SK-N-SH (cell line): ENCODE measurements at regions of chr16 and their contacts with region 1.

Region 1: GRCh38 chr16:83952940-83953795 is at the start of gene OSGIN1:
- DNase-seq: peak; percentile 88
- H3K4me3 ChIP-seq: peak within 1 kb of the TSS; percentile 62 to 65
- H3K27ac ChIP-seq: peak within 1 kb of the TSS; percentile 53 to 78
- H3K4me1 ChIP-seq: peaks cover 9 to 27% of the 10 kb centered on the region in 2 experiments; a peak in 2 of 4 replicates
- H3K27me3 ChIP-seq: no peaks in the 10 kb centered on the region
- CTCF ChIP-seq: no peak
- EP300 ChIP-seq: 0 out of 4 replicates have a peak, but pooled peaks of 1 of the 2 experiments have one; percentile 30
- RAD21 ChIP-seq: no peak
- polyA plus RNA-seq, gene OSGIN1: 4.8 and 5.2 TPM in 2 replicates

Region 2: DNA sequence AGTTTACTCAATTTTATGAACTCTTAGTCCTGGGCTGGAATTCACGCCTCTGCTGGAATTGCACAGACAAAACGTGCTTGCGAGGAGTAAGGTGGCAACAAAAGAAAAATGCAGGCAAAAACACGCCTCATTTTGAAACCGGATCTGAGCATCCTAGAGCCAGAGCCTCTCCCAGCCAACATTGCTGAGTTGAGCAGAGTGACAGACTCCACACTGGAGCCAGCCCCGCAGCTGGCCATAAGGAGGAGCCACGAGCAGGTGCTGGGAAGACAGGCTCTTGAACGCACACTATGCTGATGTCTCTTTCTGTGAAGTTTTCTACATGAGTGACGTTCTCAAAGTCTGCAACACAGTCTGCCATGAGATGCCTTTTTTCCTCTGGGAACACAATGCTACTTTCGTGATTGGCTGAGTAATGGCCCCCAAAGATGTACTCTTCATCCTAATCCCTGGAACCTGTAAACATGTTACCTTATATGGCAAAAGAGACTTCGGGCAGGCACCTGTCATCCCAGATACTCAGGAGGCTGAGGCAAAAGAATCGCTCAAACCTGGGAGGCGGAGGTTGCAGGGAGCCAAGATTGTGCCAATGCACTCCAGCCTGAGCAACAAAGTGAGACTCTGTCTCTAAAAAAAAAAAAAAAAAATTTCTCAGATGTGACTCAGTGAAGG is 159.8 kb before region 1 on chr16:
- CTCF ChIA-PET with region 1: no interaction called
- POLR2A ChIA-PET with region 1: no interaction called
- DNase-seq: no peak
- H3K4me3 ChIP-seq: no peak overlapping the region
- H3K27ac ChIP-seq: no peak overlapping the region
- H3K4me1 ChIP-seq: no peaks in the 10 kb centered on the region
- H3K27me3 ChIP-seq: no peaks in the 10 kb centered on the region
- CTCF ChIP-seq: no peak
- EP300 ChIP-seq: no peak
- RAD21 ChIP-seq: no peak

Region 3: DNA sequence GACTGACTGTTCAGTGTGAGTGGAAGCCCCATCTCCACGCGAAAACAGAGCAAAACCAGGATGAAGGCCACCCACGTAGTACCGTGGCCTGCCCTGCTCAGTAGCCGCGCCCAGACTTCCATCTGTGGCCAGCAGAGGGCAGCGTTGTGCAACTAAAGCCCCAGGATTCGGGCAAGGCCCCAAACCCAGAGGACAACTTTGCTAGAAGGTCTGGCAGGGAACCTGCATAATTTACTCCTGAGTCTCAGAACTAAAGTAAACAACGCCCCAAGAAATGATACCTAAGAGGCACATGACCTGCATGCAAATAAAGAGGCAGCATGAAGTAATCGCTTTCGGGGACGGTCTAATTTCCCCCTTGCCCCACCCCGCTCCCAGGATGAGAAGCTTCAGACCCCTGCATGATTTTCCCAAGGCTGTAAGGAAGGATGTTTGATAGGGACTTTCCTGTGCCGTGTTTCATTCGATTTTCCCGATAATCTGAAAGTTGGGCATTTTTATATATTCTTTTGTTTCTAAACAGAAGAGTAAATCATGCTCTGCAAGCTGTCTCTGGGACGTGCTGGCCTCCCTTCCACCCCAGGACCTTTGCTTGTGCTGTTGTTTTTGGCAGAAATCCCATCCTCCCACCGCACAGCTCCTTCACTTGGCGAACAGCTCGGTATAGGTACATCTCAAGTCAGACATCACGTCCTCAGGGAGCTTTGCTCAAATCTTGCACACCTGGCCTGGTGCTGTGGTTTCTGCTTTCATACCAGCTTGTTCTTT is 126.8 kb before region 1 on chr16:
- CTCF ChIA-PET with region 1: interaction called, 13 read pairs
- POLR2A ChIA-PET with region 1: no interaction called
- DNase-seq: peak; percentile 86
- H3K4me3 ChIP-seq: peak overlapping the region in 1 of 2 experiments; percentile 2; a peak in 1 of 4 replicates
- H3K27ac ChIP-seq: no peak overlapping the region
- H3K4me1 ChIP-seq: no peaks in the 10 kb centered on the region; a peak in 1 of 4 replicates
- H3K27me3 ChIP-seq: no peaks in the 10 kb centered on the region; the same call in 1 of the 2 replicates
- CTCF ChIP-seq: peak; percentile 92
- EP300 ChIP-seq: no peak
- RAD21 ChIP-seq: peak; percentile 86

Region 4: DNA sequence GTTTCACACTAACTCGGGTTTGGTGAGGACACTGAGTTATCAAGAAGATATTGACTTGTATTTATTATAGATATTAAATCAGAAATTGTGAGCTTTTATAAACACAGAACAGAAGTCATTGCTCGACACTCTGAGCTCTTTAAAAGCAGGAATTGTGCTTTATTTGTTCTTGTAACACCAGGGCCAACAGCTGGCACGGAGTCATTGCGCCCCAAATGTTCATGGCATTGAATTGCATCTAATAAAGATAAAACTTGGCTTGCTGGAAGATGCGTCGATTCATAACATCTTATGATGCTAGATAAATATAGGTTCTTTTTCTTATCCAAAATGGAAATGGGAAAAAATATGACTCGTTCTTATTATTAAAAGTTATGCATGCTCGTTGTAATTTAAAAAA is 66.1 kb before region 1 on chr16:
- CTCF ChIA-PET with region 1: no interaction called
- POLR2A ChIA-PET with region 1: no interaction called
- DNase-seq: no peak
- H3K4me3 ChIP-seq: no peak overlapping the region
- H3K27ac ChIP-seq: no peak overlapping the region
- H3K4me1 ChIP-seq: no peaks in the 10 kb centered on the region; a peak in 1 of 4 replicates
- H3K27me3 ChIP-seq: no peaks in the 10 kb centered on the region; the same call in 1 of the 2 replicates
- CTCF ChIP-seq: peak; percentile 43
- EP300 ChIP-seq: no peak
- RAD21 ChIP-seq: peak; percentile 42; the same call in 1 of the 2 replicates

Region 5: DNA sequence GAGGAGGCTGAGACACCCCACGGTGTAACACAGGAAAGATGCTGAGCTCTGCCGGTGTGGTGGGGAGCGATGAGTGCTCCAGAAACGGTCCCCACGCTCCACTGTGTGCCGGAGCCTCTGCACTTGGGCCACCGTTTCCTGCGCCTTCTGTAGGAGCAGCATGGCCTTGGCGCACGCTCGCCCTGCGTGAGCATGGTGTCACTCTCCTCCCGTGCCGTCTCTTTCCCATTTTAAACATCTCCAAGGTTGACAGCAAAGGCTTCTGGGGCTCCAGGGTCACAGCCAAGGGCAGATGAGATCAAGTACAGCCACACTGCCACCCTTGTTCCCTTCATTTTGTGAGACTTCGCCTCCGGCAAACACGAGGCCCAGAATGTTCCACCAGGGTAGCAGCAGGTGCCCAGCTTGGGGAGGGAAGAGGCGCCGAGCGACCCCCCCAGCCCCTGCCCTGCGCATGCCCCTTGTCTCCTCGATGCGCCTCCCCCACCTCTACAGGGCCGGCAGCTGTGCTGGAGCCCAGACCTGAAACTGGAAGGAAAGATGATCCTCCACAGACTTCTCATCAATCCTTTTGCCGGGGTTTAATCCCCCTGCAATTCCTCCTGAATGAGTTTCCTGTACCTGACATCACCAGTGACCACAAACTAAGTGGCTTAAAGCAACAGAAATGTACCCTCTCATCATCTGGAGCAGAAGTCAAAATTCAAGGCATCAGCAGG is 20.1 kb before region 1 on chr16:
- CTCF ChIA-PET with region 1: interaction called, 24 read pairs
- POLR2A ChIA-PET with region 1: no interaction called
- DNase-seq: no peak
- H3K4me3 ChIP-seq: no peak overlapping the region
- H3K27ac ChIP-seq: no peak overlapping the region
- H3K4me1 ChIP-seq: peaks cover 0 to 11% of the 10 kb centered on the region in 2 experiments; a peak in 1 of 4 replicates
- H3K27me3 ChIP-seq: no peaks in the 10 kb centered on the region
- CTCF ChIP-seq: no peak
- EP300 ChIP-seq: no peak
- RAD21 ChIP-seq: no peak

Region 6: DNA sequence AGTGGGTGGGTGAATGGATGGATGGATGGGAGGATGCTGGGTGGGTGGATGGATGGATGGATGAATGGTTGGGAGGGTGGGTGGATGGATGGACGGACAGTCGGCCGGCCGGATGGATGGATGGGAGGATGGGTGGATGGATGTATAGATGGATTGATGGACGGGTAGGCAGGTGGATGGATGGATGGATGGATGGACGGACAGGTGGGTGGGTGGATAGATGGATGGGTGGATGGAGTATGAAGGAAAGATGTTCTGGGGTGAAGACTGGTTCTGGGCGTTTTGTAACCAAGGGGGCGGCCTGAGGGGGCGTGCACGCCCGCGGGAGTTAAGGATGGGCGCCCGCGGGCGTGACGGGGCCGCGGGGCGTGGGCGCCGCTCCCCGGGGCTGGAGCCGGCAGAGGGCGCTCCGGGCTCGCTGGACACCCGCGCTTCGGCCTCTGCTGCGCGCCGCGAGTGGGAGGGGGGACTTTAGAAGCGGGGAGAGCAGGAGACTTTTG is 14.7 kb after region 1 on chr16 and contains the start of gene NECAB2:
- CTCF ChIA-PET with region 1: interaction called, 28 read pairs
- POLR2A ChIA-PET with region 1: no interaction called
- DNase-seq: peak; percentile 94
- H3K4me3 ChIP-seq: peak within 1 kb of the TSS in 1 of 2 experiments; percentile 32; a peak in 2 of 4 replicates
- H3K27ac ChIP-seq: no peak within 1 kb of the TSS
- H3K4me1 ChIP-seq: no peaks in the 10 kb centered on the region
- H3K27me3 ChIP-seq: no peaks in the 10 kb centered on the region
- CTCF ChIP-seq: peak; percentile 73
- EP300 ChIP-seq: no peak
- RAD21 ChIP-seq: peak; percentile 66
- polyA plus RNA-seq, gene NECAB2: 0.54 and 0.58 TPM in 2 replicates

Region 7: DNA sequence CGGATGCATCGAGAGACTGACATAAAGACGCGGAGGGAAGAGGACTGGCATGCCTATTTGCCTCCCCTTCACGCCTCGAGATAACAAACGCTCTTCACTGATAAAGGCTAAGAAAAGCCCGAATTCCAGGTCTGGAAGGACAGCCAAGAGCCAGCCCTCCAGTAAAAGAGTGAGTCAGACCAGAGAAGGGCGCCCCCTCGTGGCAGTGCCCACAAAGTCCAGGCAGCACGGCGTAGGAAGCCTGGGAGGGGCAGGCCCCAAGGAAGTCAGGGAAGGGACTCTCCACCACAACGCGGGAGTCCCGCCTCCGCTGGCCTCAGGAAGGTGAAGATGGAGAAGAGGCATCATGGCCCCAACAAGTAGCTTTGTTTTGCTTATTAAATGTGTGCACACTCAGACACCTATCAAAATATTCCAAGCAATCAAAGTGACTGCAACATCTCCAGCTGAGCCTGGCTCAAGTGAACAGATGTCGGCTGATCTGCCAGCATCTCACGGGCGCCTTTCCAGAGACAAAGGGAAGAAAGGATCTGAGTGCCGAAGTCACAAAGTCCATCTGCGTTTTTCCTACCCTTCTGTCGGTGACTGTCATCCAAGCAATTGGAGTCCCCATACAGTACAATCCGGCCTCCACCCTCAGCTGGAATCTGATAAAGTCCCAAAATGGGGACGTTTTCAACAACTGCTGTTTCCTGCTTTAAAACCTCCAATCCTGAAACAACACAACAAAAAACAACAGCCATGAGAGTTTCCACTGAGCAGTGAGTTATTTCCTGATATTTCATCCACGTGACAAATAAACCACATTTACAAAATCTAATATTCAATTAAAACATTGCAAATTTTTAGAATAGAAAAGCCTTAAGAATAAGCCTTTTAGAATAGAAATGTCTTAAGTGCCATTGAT is 109.8 kb after region 1 on chr16:
- CTCF ChIA-PET with region 1: interaction called, 470 read pairs
- POLR2A ChIA-PET with region 1: no interaction called
- DNase-seq: peak; percentile 86
- H3K4me3 ChIP-seq: peak overlapping the region in 1 of 2 experiments; percentile 44; a peak in 1 of 4 replicates
- H3K27ac ChIP-seq: no peak overlapping the region; a peak in 2 of 4 replicates
- H3K4me1 ChIP-seq: peaks cover 0 to 6% of the 10 kb centered on the region in 2 experiments; a peak in 2 of 4 replicates
- H3K27me3 ChIP-seq: no peaks in the 10 kb centered on the region
- CTCF ChIP-seq: peak; percentile 95
- EP300 ChIP-seq: no peak
- RAD21 ChIP-seq: peak; percentile 57

Region 8: GRCh38 chr16:84084570-84085270 is 131.6 kb after region 1 on chr16:
- CTCF ChIA-PET with region 1: interaction called, 18 read pairs
- POLR2A ChIA-PET with region 1: no interaction called
- DNase-seq: peak; percentile 84
- H3K4me3 ChIP-seq: peak overlapping the region in 1 of 2 experiments; percentile 16; a peak in 1 of 4 replicates
- H3K27ac ChIP-seq: no peak overlapping the region
- H3K4me1 ChIP-seq: no peaks in the 10 kb centered on the region
- H3K27me3 ChIP-seq: no peaks in the 10 kb centered on the region
- CTCF ChIP-seq: peak; percentile 82
- EP300 ChIP-seq: no peak
- RAD21 ChIP-seq: peak; percentile 72

Region 9: DNA sequence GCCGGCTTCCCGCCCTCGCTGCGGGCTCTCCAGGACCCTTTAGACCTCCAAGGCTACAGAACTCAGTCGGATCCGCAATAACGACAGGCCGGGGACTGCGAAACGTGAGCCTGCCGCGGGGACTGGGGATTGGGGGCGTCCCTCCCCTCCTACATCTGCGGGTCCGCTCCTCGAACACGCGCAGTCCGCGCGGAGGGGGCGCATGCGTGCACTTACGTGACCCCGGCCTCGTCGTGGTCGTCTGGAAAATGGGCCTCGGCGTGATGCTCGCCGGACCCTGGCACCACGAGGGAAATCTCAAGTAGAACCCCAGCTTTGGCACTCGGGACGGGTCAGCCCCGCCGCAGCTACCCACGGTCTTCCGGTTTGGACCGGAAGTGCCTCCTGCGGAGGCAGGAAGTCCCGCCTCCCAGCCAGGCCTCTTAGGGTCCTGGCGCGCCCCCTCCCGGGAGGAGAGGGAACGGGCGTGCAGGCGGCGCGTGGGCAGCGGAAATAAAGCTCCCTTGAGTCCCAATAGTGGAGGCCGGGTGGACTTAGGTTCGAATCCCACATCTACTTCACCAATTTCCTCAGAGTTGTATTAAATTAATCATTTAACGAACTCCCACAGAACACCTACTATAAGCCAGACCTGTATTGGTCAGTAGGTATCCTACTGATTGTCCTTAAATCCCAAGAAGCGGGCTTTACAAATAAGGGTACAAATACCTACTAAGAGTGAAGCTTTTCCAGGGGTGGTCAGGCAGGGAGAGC is 233.7 kb after region 1 on chr16 and contains the start of gene TAF1C:
- CTCF ChIA-PET with region 1: interaction called, 12 read pairs
- POLR2A ChIA-PET with region 1: interaction called, 3 read pairs
- DNase-seq: peak; percentile 99
- H3K4me3 ChIP-seq: peak within 1 kb of the TSS; percentile 96 to 100
- H3K27ac ChIP-seq: peak within 1 kb of the TSS; percentile 51 to 64; a peak in 3 of 4 replicates
- H3K4me1 ChIP-seq: peaks cover 0 to 11% of the 10 kb centered on the region in 2 experiments; a peak in 1 of 4 replicates
- H3K27me3 ChIP-seq: no peaks in the 10 kb centered on the region
- CTCF ChIP-seq: peak; percentile 91
- EP300 ChIP-seq: no peak; a peak in 1 of 4 replicates
- RAD21 ChIP-seq: peak; percentile 67
- polyA plus RNA-seq, gene TAF1C: 49.3 and 56.1 TPM in 2 replicates